Activated B cell treated with CpG ODN at 0.5 μM for 24 hours (primary cell): ENCODE measurements at regions of chr12 and their contacts with region 1.

Region 1: DNA sequence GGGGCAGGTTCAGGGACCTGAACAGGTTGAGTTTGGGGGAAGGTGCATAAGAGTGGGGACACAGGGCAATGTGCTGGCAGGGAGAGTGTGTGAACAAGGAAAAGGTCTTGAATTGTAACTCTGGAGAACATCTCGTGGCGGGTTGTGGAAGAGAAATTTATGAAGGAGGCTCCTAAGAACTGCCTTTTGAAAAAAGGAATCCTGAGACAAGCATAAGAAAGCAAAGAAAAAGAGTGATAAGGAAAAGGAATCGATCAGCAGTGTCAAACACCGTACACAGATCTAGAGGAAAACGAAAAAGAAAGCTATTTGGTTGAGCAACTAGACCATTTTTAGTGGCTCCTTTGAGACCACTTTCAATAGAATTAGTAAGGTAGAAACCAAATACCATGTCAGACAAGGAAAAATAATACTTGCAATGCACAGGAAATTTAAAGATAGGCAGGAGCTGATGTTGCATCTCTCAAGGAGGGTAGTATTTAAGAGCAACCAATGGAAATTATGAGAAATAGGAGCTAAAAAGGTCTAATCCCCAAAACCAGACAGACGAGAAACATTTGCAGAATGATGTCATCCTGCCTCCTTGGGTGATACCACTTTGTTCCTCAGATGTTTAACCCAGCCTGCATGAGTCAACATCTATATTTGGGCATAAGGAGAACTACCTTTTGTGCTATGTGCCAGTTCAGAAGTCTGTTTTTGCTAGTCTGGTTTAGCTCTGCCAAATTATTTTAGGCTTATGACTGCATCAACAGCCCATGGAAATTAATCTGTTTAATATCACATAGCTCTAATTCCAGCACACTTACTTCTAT is 64.5 kb upstream of the STK38L start:
- DNase-seq: no peak
- ATAC-seq: peak; percentile 97
- H3K4me3 Mint-ChIP-seq: peak overlapping the region; percentile 46
- H3K27ac Mint-ChIP-seq: peak overlapping the region; percentile 65
- H3K4me1 Mint-ChIP-seq: peaks cover 18% of the 10 kb centered on the region
- H3K27me3 Mint-ChIP-seq: no peaks in the 10 kb centered on the region
- CTCF ChIP-seq: no peak

Region 2: DNA sequence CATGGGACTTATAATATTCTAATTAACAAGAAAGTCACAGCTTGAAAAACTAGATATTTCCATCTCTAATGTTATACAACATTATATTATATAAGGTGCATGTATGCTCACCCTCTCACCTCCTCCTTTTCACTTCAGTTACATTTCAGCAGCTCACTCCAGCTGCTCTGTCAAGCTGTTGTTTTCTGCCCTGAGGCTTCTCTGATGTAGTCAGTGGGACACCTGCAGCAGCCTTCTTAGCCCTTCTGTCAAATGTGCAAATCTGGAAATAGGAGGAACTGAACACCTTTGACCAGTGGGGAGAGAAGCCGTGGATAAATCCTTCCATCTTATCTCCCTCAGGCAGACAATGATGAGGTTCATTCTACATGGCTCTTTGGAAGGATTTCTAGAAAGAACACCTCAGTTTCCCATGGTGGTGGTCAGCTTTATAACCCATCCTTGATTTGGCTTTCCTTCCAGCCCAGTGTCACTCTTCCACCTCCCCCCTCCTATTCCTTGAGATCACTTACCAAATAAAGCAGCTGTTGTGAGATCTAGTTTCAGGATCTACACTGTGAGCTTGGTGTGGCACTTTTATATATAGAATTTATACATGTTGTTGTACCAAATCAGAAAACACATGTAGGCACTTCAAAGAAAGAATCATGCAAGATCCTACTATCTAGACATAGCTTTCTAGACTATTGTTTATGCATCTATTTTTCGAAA is 15.1 kb before region 1 on chr12:
- CTCF ChIA-PET with region 1: no interaction called
- POLR2A ChIA-PET with region 1: no interaction called
- intact Hi-C with region 1: loop called (anchors 1 kb)
- DNase-seq: no peak
- ATAC-seq: no peak
- H3K4me3 Mint-ChIP-seq: no peak overlapping the region
- H3K27ac Mint-ChIP-seq: no peak overlapping the region
- H3K4me1 Mint-ChIP-seq: peaks cover 18% of the 10 kb centered on the region
- H3K27me3 Mint-ChIP-seq: no peaks in the 10 kb centered on the region
- CTCF ChIP-seq: no peak

Region 3: DNA sequence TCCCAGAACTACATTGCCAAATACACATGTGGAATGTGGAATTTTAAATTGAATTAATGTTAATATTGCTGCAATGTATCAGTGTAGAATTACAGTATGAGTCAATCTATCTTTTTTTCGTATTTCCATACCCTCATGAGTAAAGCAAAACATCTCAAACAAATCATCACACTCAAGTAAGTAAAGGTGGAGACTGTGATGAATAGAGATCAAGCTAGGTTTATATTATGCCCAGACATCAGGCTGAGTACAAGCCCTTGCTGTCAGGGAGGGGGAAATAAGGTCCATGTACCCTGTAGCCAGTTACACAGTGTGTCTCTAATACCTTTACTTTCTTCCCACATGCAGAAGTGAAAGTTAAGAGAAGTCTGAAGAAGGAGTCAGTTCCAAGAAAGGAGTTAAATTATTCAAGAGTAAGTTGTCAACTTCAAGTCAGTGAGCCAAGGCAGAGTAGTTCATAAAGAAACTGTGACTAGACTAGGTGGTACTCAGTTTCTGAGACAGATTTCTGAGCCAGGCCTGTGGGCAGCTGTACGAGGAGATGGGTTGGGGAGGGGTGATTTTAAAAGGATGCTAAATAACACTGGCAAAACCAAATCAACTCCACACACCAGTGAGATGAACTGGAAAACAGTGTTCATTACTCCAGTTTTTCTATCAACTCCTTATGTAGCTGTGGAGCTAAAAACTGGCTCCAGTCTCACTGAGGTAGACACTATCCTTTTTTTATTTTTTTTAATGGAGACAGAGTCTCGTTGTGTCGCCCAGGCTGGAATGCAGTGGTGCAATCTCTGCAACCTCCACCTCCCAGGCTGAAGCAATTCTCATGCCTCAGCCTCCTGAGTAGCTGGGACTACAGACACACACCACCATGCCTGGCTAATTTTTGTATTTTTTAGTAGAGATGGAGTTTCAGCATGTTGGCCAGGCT is 40.7 kb after region 1 on chr12:
- CTCF ChIA-PET with region 1: no interaction called
- POLR2A ChIA-PET with region 1: interaction called, 3 read pairs
- intact Hi-C with region 1: loop called (anchors 2 kb)
- DNase-seq: no peak
- ATAC-seq: peak; percentile 81
- H3K4me3 Mint-ChIP-seq: peak overlapping the region; percentile 53
- H3K27ac Mint-ChIP-seq: peak overlapping the region; percentile 84
- H3K4me1 Mint-ChIP-seq: peaks cover 39% of the 10 kb centered on the region
- H3K27me3 Mint-ChIP-seq: no peaks in the 10 kb centered on the region
- CTCF ChIP-seq: no peak